CD4-positive, alpha-beta T cell (primary cell): ENCODE measurements at regions of chr4 and their contacts with region 1.

Region 1: DNA sequence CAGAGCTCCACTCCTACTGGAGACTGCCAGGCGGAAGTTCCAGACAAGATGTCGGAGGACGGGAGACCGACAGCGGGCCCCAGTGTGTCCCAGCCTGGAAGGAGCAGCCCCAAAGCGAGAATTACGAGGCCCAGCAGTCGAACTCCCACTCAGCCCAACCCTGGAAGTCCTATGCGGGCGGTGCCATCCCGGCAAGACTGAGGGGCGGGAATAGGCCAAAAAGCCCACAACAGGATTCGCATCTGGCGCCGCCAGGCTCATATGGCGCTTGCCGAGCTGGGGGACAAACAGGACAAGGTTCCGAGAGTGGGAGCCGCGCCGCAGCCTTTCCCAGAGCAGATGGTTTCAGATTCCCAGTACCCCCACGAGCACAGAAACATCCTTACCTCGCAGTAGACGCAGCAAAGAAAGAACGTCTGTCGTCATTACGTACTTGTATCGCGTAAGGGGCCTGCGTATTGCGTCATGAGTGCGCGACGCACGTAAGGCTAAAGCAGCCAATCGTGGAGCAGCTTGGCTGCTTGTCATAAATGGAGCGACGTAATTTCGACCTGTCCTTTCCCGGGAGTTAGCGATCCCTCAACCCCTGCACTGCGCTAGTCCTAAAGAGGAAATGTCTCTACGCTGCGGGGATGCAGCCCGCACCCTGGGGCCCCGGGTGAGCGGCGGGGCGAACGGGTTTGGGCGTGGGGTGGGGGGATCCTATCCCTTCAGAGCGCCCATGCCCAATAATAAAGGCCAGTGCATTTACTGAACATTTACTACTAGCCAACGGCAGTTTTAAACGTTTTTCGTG is at the starts of genes LIAS and RPL9:
- DNase-seq: peak; percentile 86 to 98 (median 92)
- ATAC-seq: peak; percentile 78
- H3K4me3 ChIP-seq: peak within 1 kb of the TSS; percentile 68
- H3K4me3 Mint-ChIP-seq: peak within 1 kb of the TSS; percentile 96
- H3K27ac ChIP-seq: peak within 1 kb of the TSS; percentile 92 to 98
- H3K27ac Mint-ChIP-seq: peak within 1 kb of the TSS; percentile 100
- H3K4me1 ChIP-seq: peaks cover 26% of the 10 kb centered on the region
- H3K4me1 Mint-ChIP-seq: peaks cover 49% of the 10 kb centered on the region
- H3K27me3 ChIP-seq: no peaks in the 10 kb centered on the region
- H3K27me3 Mint-ChIP-seq: no peaks in the 10 kb centered on the region
- CTCF ChIP-seq: no peak
- total RNA-seq, gene LIAS: 10.0 to 10.1 TPM
- total RNA-seq, gene RPL9: 2,639 to 2,826 TPM

Region 2: DNA sequence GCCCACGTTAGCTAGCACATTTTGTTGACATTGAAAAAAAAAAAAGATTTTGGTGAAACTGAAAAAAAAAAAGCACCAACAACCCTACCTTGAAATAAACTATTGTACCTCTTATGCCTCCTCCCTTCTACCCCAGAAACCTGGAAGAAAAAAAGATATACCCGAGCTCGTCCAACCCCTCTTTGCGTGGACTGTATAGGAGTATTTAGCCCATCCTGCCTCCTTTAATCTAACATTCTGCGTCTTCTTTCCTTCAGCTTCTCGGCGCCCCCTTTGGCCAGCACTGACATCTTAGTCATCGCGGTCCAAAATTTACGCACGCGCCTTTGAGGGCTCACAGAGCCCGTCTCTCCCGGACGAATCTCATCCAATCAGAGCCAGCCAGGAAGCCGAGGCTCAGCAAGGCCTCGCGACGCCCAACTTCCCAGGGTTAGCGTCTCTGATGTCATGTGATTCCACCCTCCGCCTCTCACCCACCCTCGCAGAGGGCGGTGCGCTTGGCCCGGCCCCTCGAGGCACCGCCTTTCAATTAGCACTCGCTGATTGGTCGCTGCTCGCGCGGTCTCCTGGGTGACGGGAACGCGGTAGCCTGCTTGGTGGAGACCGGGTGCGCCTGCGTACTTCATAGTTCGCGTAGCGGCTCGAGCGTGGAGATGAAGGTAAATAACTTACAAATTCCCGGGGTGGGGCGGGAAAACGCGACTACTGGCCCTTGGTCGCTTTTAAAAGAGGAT is 276.6 kb before region 1 on chr4 and contains the start of gene WDR19:
- CTCF ChIA-PET with region 1: no interaction called
- POLR2A ChIA-PET with region 1: interaction called, 10 read pairs
- intact Hi-C with region 1: loop called in 1 of 2 experiments (anchors 5 kb)
- DNase-seq: peak; percentile 95 to 100 (median 98)
- ATAC-seq: peak; percentile 93
- H3K4me3 ChIP-seq: peak within 1 kb of the TSS; percentile 94
- H3K4me3 Mint-ChIP-seq: no peak within 1 kb of the TSS
- H3K27ac ChIP-seq: peak within 1 kb of the TSS; percentile 21 to 53
- H3K27ac Mint-ChIP-seq: no peak within 1 kb of the TSS
- H3K4me1 ChIP-seq: peaks cover 16% of the 10 kb centered on the region
- H3K4me1 Mint-ChIP-seq: peaks cover 9% of the 10 kb centered on the region
- H3K27me3 ChIP-seq: no peaks in the 10 kb centered on the region
- H3K27me3 Mint-ChIP-seq: peaks cover 3% of the 10 kb centered on the region
- CTCF ChIP-seq: peak; percentile 61
- total RNA-seq, gene WDR19: 14.5 to 16.7 TPM

Region 3: GRCh38 chr4:39365830-39366771 is 92.6 kb before region 1 on chr4 and contains the start of gene RFC1:
- CTCF ChIA-PET with region 1: no interaction called
- POLR2A ChIA-PET with region 1: interaction called, 54 read pairs
- intact Hi-C with region 1: loop called (anchors 5 kb)
- DNase-seq: peak; percentile 85 to 97 (median 91)
- ATAC-seq: peak; percentile 95
- H3K4me3 ChIP-seq: peak within 1 kb of the TSS; percentile 98
- H3K4me3 Mint-ChIP-seq: peak within 1 kb of the TSS; percentile 93
- H3K27ac ChIP-seq: peak within 1 kb of the TSS; percentile 49 to 81
- H3K27ac Mint-ChIP-seq: peak within 1 kb of the TSS; percentile 91
- H3K4me1 ChIP-seq: peaks cover 30% of the 10 kb centered on the region
- H3K4me1 Mint-ChIP-seq: peaks cover 37% of the 10 kb centered on the region
- H3K27me3 ChIP-seq: no peaks in the 10 kb centered on the region
- H3K27me3 Mint-ChIP-seq: no peaks in the 10 kb centered on the region
- CTCF ChIP-seq: no peak
- total RNA-seq, gene RFC1: 97.0 to 104 TPM

Region 4: GRCh38 chr4:39469429-39470077 is 10.8 kb after region 1 on chr4:
- CTCF ChIA-PET with region 1: interaction called, 27 read pairs
- POLR2A ChIA-PET with region 1: interaction called, 21 read pairs
- intact Hi-C with region 1: no loop called
- DNase-seq: peak in 4 of 14 experiments; percentile 11 to 72 (median 65)
- ATAC-seq: peak; percentile 94
- H3K4me3 ChIP-seq: no peak overlapping the region
- H3K4me3 Mint-ChIP-seq: no peak overlapping the region
- H3K27ac ChIP-seq: no peak overlapping the region
- H3K27ac Mint-ChIP-seq: no peak overlapping the region
- H3K4me1 ChIP-seq: no peaks in the 10 kb centered on the region
- H3K4me1 Mint-ChIP-seq: peaks cover 7% of the 10 kb centered on the region
- H3K27me3 ChIP-seq: no peaks in the 10 kb centered on the region
- H3K27me3 Mint-ChIP-seq: no peaks in the 10 kb centered on the region
- CTCF ChIP-seq: peak; percentile 92

Region 5: DNA sequence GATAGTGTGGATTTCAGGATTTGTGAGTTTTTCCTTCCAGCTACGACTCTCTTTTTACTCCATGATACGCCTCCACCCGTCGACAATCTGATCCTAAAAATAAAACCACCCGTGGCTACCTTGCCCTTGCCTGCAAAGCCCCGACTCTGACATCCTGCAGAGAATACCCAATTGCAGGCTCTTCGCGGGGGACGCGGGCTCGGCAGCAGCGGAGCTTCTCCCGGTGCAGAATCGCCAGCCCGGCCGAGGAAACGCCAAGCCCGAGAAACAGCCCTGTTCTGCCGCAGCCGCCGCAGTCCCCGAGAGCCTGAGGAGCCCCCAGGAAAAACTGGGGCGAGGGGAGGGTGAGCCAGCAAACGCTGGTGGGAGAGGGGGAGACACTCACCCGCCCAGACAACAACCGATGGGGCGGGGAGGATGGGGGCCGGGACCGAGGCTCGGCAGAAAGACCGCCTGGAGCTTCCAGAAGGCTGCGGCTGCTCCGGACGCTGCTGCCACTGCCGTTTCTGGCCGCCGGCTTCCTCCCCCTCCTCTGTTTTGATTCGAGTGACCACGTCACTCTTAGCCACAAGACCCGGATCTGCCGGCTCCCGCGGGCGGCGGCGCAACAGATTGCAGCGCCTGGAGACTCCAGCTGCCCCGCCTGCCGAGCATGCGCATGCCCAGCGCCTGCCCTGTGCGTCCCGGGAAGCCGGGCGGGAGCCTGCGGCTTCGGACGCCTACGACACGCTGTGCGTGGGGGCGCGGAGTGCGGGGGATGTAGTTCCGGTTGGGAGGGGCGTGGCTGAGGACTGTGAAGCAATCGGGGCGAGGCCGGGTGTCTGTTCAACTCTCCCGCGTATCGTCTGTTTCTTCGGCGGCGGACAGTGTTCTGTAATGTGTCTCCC is 179.9 kb after region 1 on chr4 and contains the start of gene SMIM14:
- CTCF ChIA-PET with region 1: interaction called, 3 read pairs
- POLR2A ChIA-PET with region 1: interaction called, 17 read pairs
- intact Hi-C with region 1: loop called (anchors 2 to 5 kb)
- DNase-seq: peak; percentile 65 to 95 (median 84)
- ATAC-seq: peak; percentile 79
- H3K4me3 ChIP-seq: peak within 1 kb of the TSS; percentile 96
- H3K4me3 Mint-ChIP-seq: peak within 1 kb of the TSS; percentile 88
- H3K27ac ChIP-seq: peak within 1 kb of the TSS; percentile 78 to 90
- H3K27ac Mint-ChIP-seq: peak within 1 kb of the TSS; percentile 85
- H3K4me1 ChIP-seq: peaks cover 25% of the 10 kb centered on the region
- H3K4me1 Mint-ChIP-seq: peaks cover 50% of the 10 kb centered on the region
- H3K27me3 ChIP-seq: no peaks in the 10 kb centered on the region
- H3K27me3 Mint-ChIP-seq: no peaks in the 10 kb centered on the region
- CTCF ChIP-seq: no peak
- total RNA-seq, gene SMIM14: 2.0 to 3.1 TPM

Region 6: DNA sequence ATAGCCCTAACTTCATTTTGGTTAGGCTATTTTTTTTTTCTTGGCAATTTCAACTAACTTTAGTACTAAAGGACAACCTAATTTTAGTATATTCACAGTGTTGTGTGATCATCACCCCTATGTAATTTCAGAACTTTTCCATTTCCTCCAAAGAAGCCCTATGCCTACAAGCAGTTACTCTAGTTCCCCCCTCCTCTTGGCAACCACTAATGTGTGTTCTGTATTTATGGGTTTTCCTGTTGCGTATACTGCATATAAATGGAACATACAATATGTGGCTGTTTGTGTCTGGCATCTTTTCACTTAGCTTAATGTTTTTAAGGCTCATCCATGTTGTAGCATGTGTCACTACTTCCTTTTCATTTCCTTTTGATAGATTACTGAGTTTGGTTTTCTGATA is 655.5 kb after region 1 on chr4:
- CTCF ChIA-PET with region 1: no interaction called
- POLR2A ChIA-PET with region 1: no interaction called
- intact Hi-C with region 1: no loop called
- DNase-seq: no peak
- ATAC-seq: no peak
- H3K4me3 ChIP-seq: no peak overlapping the region
- H3K4me3 Mint-ChIP-seq: no peak overlapping the region
- H3K27ac ChIP-seq: no peak overlapping the region
- H3K27ac Mint-ChIP-seq: no peak overlapping the region
- H3K4me1 ChIP-seq: no peaks in the 10 kb centered on the region
- H3K4me1 Mint-ChIP-seq: peaks cover under 1% of the 10 kb centered on the region
- H3K27me3 ChIP-seq: no peaks in the 10 kb centered on the region
- H3K27me3 Mint-ChIP-seq: no peaks in the 10 kb centered on the region
- CTCF ChIP-seq: no peak